ENCODE measurements at regions of chr16 and their contacts with region 1.

Region 1: DNA sequence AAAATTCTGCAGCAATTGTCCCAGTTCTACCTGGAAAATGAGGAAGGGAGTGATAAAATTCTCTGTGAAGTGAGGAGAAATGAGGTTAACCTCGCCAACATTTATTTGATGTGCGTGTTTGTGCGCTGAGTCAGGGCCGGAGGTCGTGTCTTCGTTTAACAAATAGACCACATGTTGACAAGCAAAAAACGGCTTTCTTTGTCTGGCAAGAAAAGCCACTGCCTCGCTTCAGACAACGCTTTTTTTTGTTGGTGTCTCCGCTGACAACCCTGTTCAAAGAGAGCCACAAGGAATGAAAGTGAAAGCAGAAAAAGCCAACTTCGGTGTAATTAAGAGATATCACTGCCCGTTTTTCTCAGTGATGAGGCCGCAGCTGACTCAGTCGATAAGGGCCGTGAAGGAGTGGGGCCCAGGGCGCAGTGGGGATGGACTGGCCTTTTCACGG is 510.6 kb downstream of the CDH13 start:
- DNase-seq: peak; percentile 44 to 62
- H3K4me3 ChIP-seq: peak overlapping the region; percentile 10
- H3K4me3 Mint-ChIP-seq: peak overlapping the region; percentile 65
- H3K27ac Mint-ChIP-seq: peak overlapping the region; percentile 83
- H3K4me1 ChIP-seq: peaks cover 15% of the 10 kb centered on the region
- H3K4me1 Mint-ChIP-seq: peaks cover 17% of the 10 kb centered on the region
- H3K27me3 ChIP-seq: no peaks in the 10 kb centered on the region
- H3K27me3 Mint-ChIP-seq: no peaks in the 10 kb centered on the region
- CTCF ChIP-seq: no peak

Region 2: GRCh38 chr16:83198977-83199376 is 61.6 kb after region 1 on chr16:
- CTCF ChIA-PET with region 1: no interaction called
- POLR2A ChIA-PET with region 1: no interaction called
- intact Hi-C with region 1: loop called (anchors 5 kb)
- DNase-seq: no peak
- H3K4me3 ChIP-seq: no peak overlapping the region
- H3K4me3 Mint-ChIP-seq: no peak overlapping the region
- H3K27ac Mint-ChIP-seq: no peak overlapping the region
- H3K4me1 ChIP-seq: no peaks in the 10 kb centered on the region
- H3K4me1 Mint-ChIP-seq: no peaks in the 10 kb centered on the region
- H3K27me3 ChIP-seq: no peaks in the 10 kb centered on the region; the same call in 1 of the 2 replicates
- H3K27me3 Mint-ChIP-seq: peaks cover 6% of the 10 kb centered on the region
- CTCF ChIP-seq: no peak

Measured in Caco-2 (cell line).